ENCODE measurements at regions of chrX and their contacts with region 1.

Region 1: GRCh38 chrX:107672955-107673378 is 44.7 kb downstream of the PRPS1 start:
- DNase-seq: peak; percentile 75 to 88
- ATAC-seq: peak; percentile 57 to 69 (median 62)
- H3K4me3 ChIP-seq: no peak overlapping the region
- H3K27ac ChIP-seq: peak overlapping the region; percentile 83
- H3K4me1 ChIP-seq: peaks cover 24% of the 10 kb centered on the region
- H3K27me3 ChIP-seq: peaks cover 0 to 7% (median 0%) of the 10 kb centered on the region in 3 donors
- CTCF ChIP-seq: peak; percentile 61

Region 2: GRCh38 chrX:107710617-107711391 is 37.8 kb after region 1 on chrX:
- intact Hi-C with region 1: loop called (anchors 2 to 5 kb)
- DNase-seq: peak in 1 of 2 donors; percentile 48
- ATAC-seq: peak in 3 of 4 donors; percentile 12 to 26 (median 17)
- H3K4me3 ChIP-seq: no peak overlapping the region
- H3K27ac ChIP-seq: peak overlapping the region; percentile 86
- H3K4me1 ChIP-seq: peaks cover 26% of the 10 kb centered on the region
- H3K27me3 ChIP-seq: peaks cover 0 to 5% (median 0%) of the 10 kb centered on the region in 3 donors
- CTCF ChIP-seq: no peak

Region 3: GRCh38 chrX:107718156-107718621 is 45.2 kb after region 1 on chrX:
- intact Hi-C with region 1: loop called (anchors 1 to 5 kb)
- DNase-seq: peak; percentile 64 to 75
- ATAC-seq: peak; percentile 62 to 74 (median 70)
- H3K4me3 ChIP-seq: no peak overlapping the region
- H3K27ac ChIP-seq: peak overlapping the region; percentile 86
- H3K4me1 ChIP-seq: peaks cover 30% of the 10 kb centered on the region
- H3K27me3 ChIP-seq: peaks cover 0 to 23% (median 0%) of the 10 kb centered on the region in 3 donors
- CTCF ChIP-seq: peak; percentile 88